Panc1 (cell line): ENCODE measurements at regions of chr12 and their contacts with region 1.

Region 1: GRCh38 chr12:64273527-64274403 is 51.7 kb upstream of the KICS2 start:
- DNase-seq: no peak
- ATAC-seq: peak; percentile 88
- H3K4me3 ChIP-seq: no peak overlapping the region
- H3K27ac ChIP-seq: no peak overlapping the region
- H3K4me1 ChIP-seq: no peaks in the 10 kb centered on the region
- H3K27me3 ChIP-seq: no peaks in the 10 kb centered on the region
- CTCF ChIP-seq: peak; percentile 72

Region 2: GRCh38 chr12:64212119-64212746 is 61.5 kb before region 1 on chr12:
- CTCF ChIA-PET with region 1: no interaction called
- POLR2A ChIA-PET with region 1: no interaction called
- in situ Hi-C with region 1: no loop called
- intact Hi-C with region 1: no loop called
- DNase-seq: no peak
- ATAC-seq: no peak
- H3K4me3 ChIP-seq: no peak overlapping the region
- H3K27ac ChIP-seq: no peak overlapping the region
- H3K4me1 ChIP-seq: no peaks in the 10 kb centered on the region
- H3K27me3 ChIP-seq: no peaks in the 10 kb centered on the region
- CTCF ChIP-seq: no peak

Region 3: GRCh38 chr12:64252681-64253080 is 21.1 kb before region 1 on chr12:
- CTCF ChIA-PET with region 1: no interaction called
- POLR2A ChIA-PET with region 1: no interaction called
- in situ Hi-C with region 1: no loop called
- intact Hi-C with region 1: no loop called
- DNase-seq: no peak
- ATAC-seq: no peak
- H3K4me3 ChIP-seq: no peak overlapping the region
- H3K27ac ChIP-seq: no peak overlapping the region
- H3K4me1 ChIP-seq: no peaks in the 10 kb centered on the region
- H3K27me3 ChIP-seq: no peaks in the 10 kb centered on the region
- CTCF ChIP-seq: no peak

Region 4: GRCh38 chr12:64392221-64392620 is 118.5 kb after region 1 on chr12:
- CTCF ChIA-PET with region 1: interaction called, 10 read pairs
- POLR2A ChIA-PET with region 1: no interaction called
- in situ Hi-C with region 1: no loop called
- intact Hi-C with region 1: loop called (anchors 2 kb)
- DNase-seq: no peak
- ATAC-seq: peak; percentile 56
- H3K4me3 ChIP-seq: no peak overlapping the region
- H3K27ac ChIP-seq: no peak overlapping the region
- H3K4me1 ChIP-seq: peaks cover 7% of the 10 kb centered on the region
- H3K27me3 ChIP-seq: no peaks in the 10 kb centered on the region
- CTCF ChIP-seq: peak; percentile 68

Region 5: DNA sequence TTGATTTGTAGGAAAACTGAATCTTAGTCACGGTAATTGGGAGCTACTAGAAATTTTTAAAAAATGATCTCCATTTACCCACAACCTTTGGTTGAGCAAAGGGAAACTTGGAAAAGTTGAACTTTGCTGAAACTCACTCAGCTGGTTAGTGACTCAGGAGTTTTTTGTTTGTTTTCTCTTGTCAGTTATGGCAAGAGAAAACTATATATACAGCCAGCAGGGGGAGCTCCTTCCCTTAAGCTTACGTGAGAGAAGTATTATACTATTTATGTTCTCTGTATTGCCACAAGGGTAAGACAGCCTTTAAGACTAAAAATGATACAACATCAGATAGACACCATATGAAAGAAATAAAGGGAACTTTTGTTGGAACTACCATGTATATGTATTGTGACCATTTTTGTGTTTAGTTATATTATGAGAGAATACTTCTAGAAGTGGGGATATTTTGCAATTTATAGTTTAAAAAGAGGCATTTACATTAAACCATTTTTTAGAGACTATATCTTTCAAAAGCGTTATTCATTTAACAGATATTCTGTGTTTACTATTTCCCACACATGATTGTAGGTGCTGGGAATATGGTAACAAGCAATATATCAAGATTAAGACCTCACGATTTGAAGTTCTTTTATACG is 522.6 kb after region 1 on chr12:
- CTCF ChIA-PET with region 1: interaction called, 10 read pairs
- POLR2A ChIA-PET with region 1: no interaction called
- in situ Hi-C with region 1: no loop called
- intact Hi-C with region 1: no loop called
- DNase-seq: peak; percentile 72
- ATAC-seq: peak; percentile 88
- H3K4me3 ChIP-seq: no peak overlapping the region
- H3K27ac ChIP-seq: peak overlapping the region; percentile 12; the same call in 1 of the 2 replicates
- H3K4me1 ChIP-seq: peaks cover 17% of the 10 kb centered on the region; the same call in 1 of the 2 replicates
- H3K27me3 ChIP-seq: no peaks in the 10 kb centered on the region
- CTCF ChIP-seq: peak; percentile 84; the same call in 1 of the 2 replicates